ENCODE measurements at regions of chr9 and their contacts with region 1.

Region 1: GRCh38 chr9:35914301-35914807 is 5.1 kb downstream of the SPAAR start:
- DNase-seq: peak; percentile 85
- ATAC-seq: peak; percentile 85
- H3K4me3 ChIP-seq: no peak overlapping the region
- H3K27ac ChIP-seq: no peak overlapping the region
- H3K4me1 ChIP-seq: peaks cover 62% of the 10 kb centered on the region
- H3K27me3 ChIP-seq: peaks cover 0 to 4% of the 10 kb centered on the region in 2 experiments; a peak in 1 of 5 replicates
- CTCF ChIP-seq: no peak; the same call in 1 of the 2 replicates
- EP300 ChIP-seq: no peak
- POLR2A ChIP-seq: no peak
- RAD21 ChIP-seq: no peak

Region 2: DNA sequence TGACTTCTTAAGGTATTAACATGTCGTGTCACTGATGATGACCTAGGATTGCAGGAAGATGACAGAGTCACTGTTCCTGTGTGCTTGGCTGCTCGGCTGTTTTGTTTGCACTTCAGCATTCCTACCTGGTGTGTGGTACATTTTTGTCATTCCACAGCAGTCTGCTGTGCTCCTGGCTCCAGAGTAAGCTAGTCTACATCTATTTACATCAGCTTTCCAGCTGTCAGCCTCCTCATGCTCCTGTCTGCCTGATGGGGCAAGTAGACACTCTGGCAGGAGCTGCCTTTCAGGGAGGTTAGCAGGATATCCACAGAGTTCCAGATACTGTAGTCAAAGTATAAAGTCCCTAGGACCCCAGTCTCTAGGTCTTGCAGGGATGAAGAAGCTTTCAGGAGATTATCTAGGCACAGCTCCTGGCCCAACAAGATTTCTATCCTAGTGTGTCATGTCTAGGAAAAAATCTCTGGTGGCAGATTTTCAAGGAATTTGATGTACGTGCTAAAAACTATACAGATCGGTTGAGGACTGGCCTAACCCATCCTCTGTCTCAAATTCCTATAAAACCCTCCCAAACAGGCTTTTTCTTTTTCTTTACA is 396.0 kb before region 1 on chr9:
- CTCF ChIA-PET with region 1: no interaction called
- POLR2A ChIA-PET with region 1: no interaction called
- in situ Hi-C with region 1: no loop called
- intact Hi-C with region 1: no loop called
- DNase-seq: peak; percentile 96
- ATAC-seq: peak; percentile 99
- H3K4me3 ChIP-seq: no peak overlapping the region; a peak in 1 of 6 replicates
- H3K27ac ChIP-seq: peak overlapping the region; percentile 66
- H3K4me1 ChIP-seq: peaks cover 66% of the 10 kb centered on the region
- H3K27me3 ChIP-seq: no peaks in the 10 kb centered on the region
- CTCF ChIP-seq: no peak; the same call in 1 of the 2 replicates
- EP300 ChIP-seq: peak; percentile 11 to 71; a peak in 2 of 4 replicates
- POLR2A ChIP-seq: 0 out of 4 replicates have a peak, but pooled peaks of 1 of the 2 experiments have one; percentile 3
- RAD21 ChIP-seq: no peak

Region 3: DNA sequence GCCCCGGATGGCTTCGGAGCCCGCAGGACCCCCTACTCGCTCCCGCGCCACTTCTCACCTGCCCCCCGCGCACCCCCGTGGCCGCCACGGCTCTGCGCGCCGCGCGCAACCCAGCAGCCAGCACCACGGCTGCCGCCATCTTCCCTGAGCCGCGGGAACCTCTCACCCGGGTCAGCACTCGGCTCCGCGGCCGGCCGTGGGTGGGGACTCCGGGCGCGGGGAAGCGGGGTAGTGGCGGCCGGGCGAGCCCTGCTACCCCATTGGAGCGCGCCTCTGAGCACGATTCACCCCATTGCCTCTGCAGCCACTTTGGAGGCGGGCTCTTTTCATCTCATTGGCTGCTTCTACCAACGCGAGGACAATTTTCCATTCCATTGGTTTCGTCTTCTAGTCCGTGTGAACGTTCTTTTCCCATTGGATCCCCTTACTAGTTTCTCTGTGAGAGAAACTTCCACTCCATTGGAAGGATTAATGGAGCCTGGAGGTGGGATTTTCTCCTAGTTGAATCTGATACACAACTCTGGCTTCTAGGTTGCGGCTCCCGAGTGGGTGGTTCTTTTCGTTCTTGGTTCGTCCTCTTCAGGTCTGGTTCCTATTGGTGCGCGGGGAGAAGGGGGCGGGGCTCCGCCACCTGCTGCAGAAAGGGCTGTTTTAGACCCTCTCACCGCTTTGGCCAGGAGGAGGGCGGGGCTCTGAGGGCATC is 99.4 kb before region 1 on chr9 and contains the start of gene HINT2:
- CTCF ChIA-PET with region 1: no interaction called
- POLR2A ChIA-PET with region 1: no interaction called
- in situ Hi-C with region 1: no loop called
- intact Hi-C with region 1: no loop called
- DNase-seq: peak; percentile 99
- ATAC-seq: peak; percentile 90
- H3K4me3 ChIP-seq: peak within 1 kb of the TSS; percentile 68 to 86 (median 86)
- H3K27ac ChIP-seq: peak within 1 kb of the TSS; percentile 99
- H3K4me1 ChIP-seq: peaks cover 44% of the 10 kb centered on the region
- H3K27me3 ChIP-seq: no peaks in the 10 kb centered on the region
- CTCF ChIP-seq: no peak
- EP300 ChIP-seq: no peak
- POLR2A ChIP-seq: peak; percentile 79 to 82
- RAD21 ChIP-seq: no peak
- total RNA-seq, gene HINT2: 51.4 and 56.2 TPM in 2 replicates

Region 4: DNA sequence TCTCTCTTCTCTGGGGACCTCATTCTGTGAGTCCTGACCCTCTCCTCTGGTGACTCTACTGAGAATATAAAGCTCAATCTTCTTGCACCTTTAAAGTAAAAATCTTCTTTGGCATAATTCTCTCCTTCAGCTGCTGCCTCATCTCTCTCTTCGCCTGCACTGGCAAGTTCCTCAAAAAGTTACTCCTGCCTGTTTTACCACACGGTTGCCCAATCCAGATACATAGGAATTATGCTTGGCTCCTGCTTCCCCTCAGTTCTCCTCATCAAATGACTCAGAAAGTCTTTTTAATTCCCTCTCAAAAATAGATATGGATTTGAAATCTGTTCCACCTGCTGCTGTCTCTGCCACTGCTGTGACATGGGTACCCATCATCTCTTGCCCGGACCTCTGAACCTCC is 22.7 kb before region 1 on chr9:
- CTCF ChIA-PET with region 1: no interaction called
- POLR2A ChIA-PET with region 1: no interaction called
- in situ Hi-C with region 1: no loop called
- intact Hi-C with region 1: no loop called
- DNase-seq: no peak
- ATAC-seq: no peak
- H3K4me3 ChIP-seq: no peak overlapping the region
- H3K27ac ChIP-seq: no peak overlapping the region
- H3K4me1 ChIP-seq: no peaks in the 10 kb centered on the region
- H3K27me3 ChIP-seq: peaks cover 0 to 4% of the 10 kb centered on the region in 2 experiments; a peak in 1 of 5 replicates
- CTCF ChIP-seq: no peak
- EP300 ChIP-seq: no peak
- POLR2A ChIP-seq: no peak
- RAD21 ChIP-seq: no peak

Region 5: GRCh38 chr9:35928591-35929452 is 14.5 kb after region 1 on chr9:
- CTCF ChIA-PET with region 1: no interaction called
- POLR2A ChIA-PET with region 1: no interaction called
- in situ Hi-C with region 1: no loop called
- intact Hi-C with region 1: loop called (anchors 2 kb)
- DNase-seq: no peak
- ATAC-seq: no peak
- H3K4me3 ChIP-seq: no peak overlapping the region
- H3K27ac ChIP-seq: no peak overlapping the region
- H3K4me1 ChIP-seq: peaks cover 8% of the 10 kb centered on the region
- H3K27me3 ChIP-seq: no peaks in the 10 kb centered on the region
- CTCF ChIP-seq: no peak
- EP300 ChIP-seq: no peak
- POLR2A ChIP-seq: no peak
- RAD21 ChIP-seq: no peak

Measured in HepG2 (cell line).